Activated CD8-positive, alpha-beta T cell treated with anti-CD3 and anti-CD28 coated beads for 36 hours (primary cell): ENCODE measurements at regions of chr10 and their contacts with region 1.

Region 1: GRCh38 chr10:14536241-14537213 is 205.8 kb upstream of the FRMD4A start:
- DNase-seq: peak; percentile 67
- ATAC-seq: peak; percentile 44
- H3K4me3 Mint-ChIP-seq: no peak overlapping the region
- H3K27ac Mint-ChIP-seq: peak overlapping the region; percentile 39
- H3K4me1 Mint-ChIP-seq: peaks cover 78% of the 10 kb centered on the region
- H3K27me3 Mint-ChIP-seq: no peaks in the 10 kb centered on the region
- CTCF ChIP-seq: peak; percentile 65

Region 2: GRCh38 chr10:14508725-14509124 is 27.8 kb before region 1 on chr10:
- CTCF ChIA-PET with region 1: interaction called, 21 read pairs
- POLR2A ChIA-PET with region 1: no interaction called
- intact Hi-C with region 1: no loop called
- DNase-seq: no peak
- ATAC-seq: no peak
- H3K4me3 Mint-ChIP-seq: no peak overlapping the region
- H3K27ac Mint-ChIP-seq: peak overlapping the region; percentile 56
- H3K4me1 Mint-ChIP-seq: peaks cover 33% of the 10 kb centered on the region
- H3K27me3 Mint-ChIP-seq: no peaks in the 10 kb centered on the region
- CTCF ChIP-seq: no peak

Region 3: GRCh38 chr10:14822879-14823755 is 286.6 kb after region 1 on chr10:
- CTCF ChIA-PET with region 1: interaction called, 17 read pairs
- POLR2A ChIA-PET with region 1: no interaction called
- intact Hi-C with region 1: no loop called
- DNase-seq: peak; percentile 69
- ATAC-seq: peak; percentile 68
- H3K4me3 Mint-ChIP-seq: no peak overlapping the region
- H3K27ac Mint-ChIP-seq: no peak overlapping the region
- H3K4me1 Mint-ChIP-seq: peaks cover 3% of the 10 kb centered on the region
- H3K27me3 Mint-ChIP-seq: no peaks in the 10 kb centered on the region
- CTCF ChIP-seq: peak; percentile 83

Region 4: GRCh38 chr10:15485684-15486316 is 949.3 kb after region 1 on chr10:
- CTCF ChIA-PET with region 1: no interaction called
- POLR2A ChIA-PET with region 1: no interaction called
- intact Hi-C with region 1: no loop called
- DNase-seq: no peak
- ATAC-seq: no peak
- H3K4me3 Mint-ChIP-seq: no peak overlapping the region
- H3K27ac Mint-ChIP-seq: no peak overlapping the region
- H3K4me1 Mint-ChIP-seq: no peaks in the 10 kb centered on the region
- H3K27me3 Mint-ChIP-seq: peaks cover 8% of the 10 kb centered on the region
- CTCF ChIP-seq: no peak